Activated CD8-positive, alpha-beta T cell treated with anti-CD3 and anti-CD28 coated beads for 36 hours (primary cell): ENCODE measurements at regions of chr20 and their contacts with region 1.

Region 1: DNA sequence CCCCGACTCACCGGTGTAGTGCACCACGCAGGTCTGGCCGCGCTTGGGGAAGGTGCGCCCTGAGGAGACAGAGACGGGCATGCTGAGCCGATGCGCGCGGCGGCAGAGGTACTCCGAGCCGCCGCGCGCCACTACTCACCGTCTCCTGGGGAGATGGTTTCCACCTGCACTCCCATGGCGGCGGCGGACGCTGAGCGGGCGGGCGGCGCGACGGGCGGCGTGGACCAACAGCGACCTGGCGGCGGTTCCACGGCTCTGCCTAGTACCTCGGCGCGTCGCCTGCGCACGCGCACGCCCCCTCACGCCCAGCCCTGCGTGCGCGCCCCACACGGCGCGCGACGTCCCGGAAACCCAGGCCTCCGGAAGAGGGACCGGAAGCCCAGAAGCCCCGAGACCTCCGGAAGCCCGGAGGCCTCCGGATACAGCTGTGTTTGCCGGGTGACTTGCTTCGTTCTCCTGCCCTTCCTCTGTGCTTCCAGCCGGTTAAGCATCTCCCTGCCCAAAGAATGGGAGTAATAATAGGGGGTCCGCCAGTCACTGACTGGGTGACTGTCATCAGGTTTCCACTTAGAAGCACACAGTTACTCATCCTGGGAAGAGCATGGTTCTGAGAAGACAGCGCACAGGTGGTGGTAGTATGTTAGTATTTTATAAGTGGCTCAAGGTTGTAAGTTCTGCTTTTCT is at the start of gene FKBP1A:
- DNase-seq: peak; percentile 92
- ATAC-seq: peak; percentile 88
- H3K4me3 Mint-ChIP-seq: peak within 1 kb of the TSS; percentile 82
- H3K27ac Mint-ChIP-seq: peak within 1 kb of the TSS; percentile 91
- H3K4me1 Mint-ChIP-seq: peaks cover 46% of the 10 kb centered on the region
- H3K27me3 Mint-ChIP-seq: no peaks in the 10 kb centered on the region
- CTCF ChIP-seq: no peak
- total RNA-seq, gene FKBP1A: 259 to 282 TPM

Region 2: DNA sequence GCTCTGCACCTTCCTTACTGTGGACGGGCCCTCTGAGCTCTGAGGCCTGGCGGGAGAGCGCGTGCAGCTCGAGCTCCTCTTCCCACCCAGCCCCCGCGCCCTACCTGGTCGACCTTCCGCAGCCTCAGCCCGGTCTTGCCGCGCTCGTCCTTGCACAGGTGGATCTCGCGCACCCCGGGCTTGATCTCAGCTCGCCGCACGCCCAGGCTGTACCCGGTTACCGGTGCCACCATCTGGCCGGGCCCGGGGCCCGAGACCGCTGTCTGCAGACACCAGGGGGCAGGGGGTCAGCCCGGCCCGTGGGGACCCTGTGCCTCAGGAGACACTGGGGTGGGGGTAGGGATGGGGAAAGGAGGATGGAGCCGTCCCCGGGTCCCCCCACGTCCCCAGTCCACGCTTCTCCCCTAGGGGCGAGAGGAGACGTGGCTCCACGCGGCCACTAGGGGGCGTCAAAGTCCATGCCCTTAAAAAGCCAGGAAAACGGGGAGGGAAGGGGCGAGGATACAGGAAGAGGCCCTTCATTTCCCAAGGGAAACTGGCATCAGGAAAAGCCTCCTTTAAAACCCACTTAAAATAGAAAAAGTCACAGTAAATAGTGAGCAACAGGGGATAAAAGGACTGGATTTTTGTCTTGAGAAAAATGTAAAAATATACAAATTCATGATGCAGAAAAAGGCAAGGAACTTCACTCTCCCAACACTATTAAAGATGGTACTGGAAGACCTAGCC is 79.6 kb before region 1 on chr20:
- CTCF ChIA-PET with region 1: interaction called, 12 read pairs
- POLR2A ChIA-PET with region 1: interaction called, 4 read pairs
- intact Hi-C with region 1: no loop called
- DNase-seq: peak; percentile 65
- ATAC-seq: peak; percentile 81
- H3K4me3 Mint-ChIP-seq: no peak overlapping the region
- H3K27ac Mint-ChIP-seq: no peak overlapping the region
- H3K4me1 Mint-ChIP-seq: peaks cover 13% of the 10 kb centered on the region
- H3K27me3 Mint-ChIP-seq: peaks cover 2% of the 10 kb centered on the region
- CTCF ChIP-seq: peak; percentile 100

Region 3: DNA sequence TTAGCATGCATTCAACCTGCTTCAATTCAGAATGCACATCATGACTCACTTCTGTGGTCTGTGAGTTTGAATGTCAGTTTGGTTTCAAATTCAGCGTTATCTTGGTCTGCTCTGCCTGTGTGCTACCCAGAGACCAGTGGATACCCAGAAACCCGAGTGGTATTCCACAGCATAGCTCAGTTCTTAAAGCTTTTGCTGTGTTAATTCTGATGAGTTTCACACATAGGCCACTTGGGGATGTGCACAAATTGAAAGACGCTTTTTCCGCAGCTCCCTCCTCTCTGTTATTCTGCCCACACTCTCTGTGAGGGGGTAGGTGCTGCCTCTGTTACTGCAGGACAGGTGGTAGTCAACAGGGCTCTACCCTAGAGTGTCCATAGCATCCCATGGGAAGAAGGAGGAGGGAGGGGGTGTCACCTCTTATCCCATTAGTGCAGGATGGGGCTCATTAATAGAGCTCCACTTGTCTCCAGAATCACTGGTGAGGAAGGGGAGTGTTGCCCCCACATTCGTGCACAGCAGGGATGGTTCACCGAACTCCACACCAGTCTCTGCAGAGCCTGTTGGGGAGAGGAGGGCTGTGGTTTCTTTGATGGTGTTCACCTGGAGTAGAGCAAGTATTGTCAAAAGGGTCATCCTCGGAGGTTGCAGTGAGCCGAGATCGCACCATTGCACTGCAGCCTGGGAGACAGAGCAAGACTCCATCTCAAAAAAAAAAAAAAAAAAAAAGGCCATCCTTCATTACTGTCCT is 34.9 kb before region 1 on chr20:
- CTCF ChIA-PET with region 1: interaction called, 4 read pairs
- POLR2A ChIA-PET with region 1: interaction called, 5 read pairs
- intact Hi-C with region 1: loop called (anchors 5 kb)
- DNase-seq: peak; percentile 72
- ATAC-seq: peak; percentile 93
- H3K4me3 Mint-ChIP-seq: peak overlapping the region; percentile 49
- H3K27ac Mint-ChIP-seq: peak overlapping the region; percentile 88
- H3K4me1 Mint-ChIP-seq: peaks cover 64% of the 10 kb centered on the region
- H3K27me3 Mint-ChIP-seq: no peaks in the 10 kb centered on the region
- CTCF ChIP-seq: peak; percentile 40

Region 4: DNA sequence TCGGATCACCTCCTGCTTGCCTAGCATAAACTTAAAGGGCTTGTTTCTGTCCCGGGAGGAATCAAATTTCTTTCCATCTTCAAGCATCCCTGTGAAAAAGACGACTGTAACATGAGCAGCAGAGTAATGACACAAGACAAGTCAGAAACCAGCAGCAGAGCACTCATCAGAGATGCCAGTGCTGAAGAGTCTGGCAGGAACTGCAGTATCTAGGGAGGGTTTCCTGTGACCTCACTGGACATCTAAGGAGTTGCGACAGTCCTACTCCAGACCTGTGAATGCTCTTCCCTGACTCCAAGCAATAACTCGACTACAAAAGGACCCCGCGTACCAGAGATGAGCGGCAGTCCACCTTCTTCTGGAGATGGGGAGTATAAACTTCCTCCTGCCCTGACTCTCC is 17.4 kb before region 1 on chr20:
- CTCF ChIA-PET with region 1: interaction called, 5 read pairs
- POLR2A ChIA-PET with region 1: interaction called, 18 read pairs
- intact Hi-C with region 1: no loop called
- DNase-seq: no peak
- ATAC-seq: no peak
- H3K4me3 Mint-ChIP-seq: no peak overlapping the region
- H3K27ac Mint-ChIP-seq: peak overlapping the region; percentile 60
- H3K4me1 Mint-ChIP-seq: peaks cover 84% of the 10 kb centered on the region
- H3K27me3 Mint-ChIP-seq: no peaks in the 10 kb centered on the region
- CTCF ChIP-seq: no peak

Region 5: GRCh38 chr20:1381753-1382591 is 11.0 kb before region 1 on chr20:
- CTCF ChIA-PET with region 1: interaction called, 5 read pairs
- POLR2A ChIA-PET with region 1: interaction called, 18 read pairs
- intact Hi-C with region 1: no loop called
- DNase-seq: no peak
- ATAC-seq: no peak
- H3K4me3 Mint-ChIP-seq: no peak overlapping the region
- H3K27ac Mint-ChIP-seq: peak overlapping the region; percentile 18
- H3K4me1 Mint-ChIP-seq: peaks cover 96% of the 10 kb centered on the region
- H3K27me3 Mint-ChIP-seq: no peaks in the 10 kb centered on the region
- CTCF ChIP-seq: no peak

Region 6: GRCh38 chr20:1415667-1416468 is 22.9 kb after region 1 on chr20:
- CTCF ChIA-PET with region 1: no interaction called
- POLR2A ChIA-PET with region 1: no interaction called
- intact Hi-C with region 1: no loop called
- DNase-seq: peak; percentile 43
- ATAC-seq: peak; percentile 83
- H3K4me3 Mint-ChIP-seq: no peak overlapping the region
- H3K27ac Mint-ChIP-seq: no peak overlapping the region
- H3K4me1 Mint-ChIP-seq: peaks cover 8% of the 10 kb centered on the region
- H3K27me3 Mint-ChIP-seq: peaks cover 4% of the 10 kb centered on the region
- CTCF ChIP-seq: no peak

Region 7: DNA sequence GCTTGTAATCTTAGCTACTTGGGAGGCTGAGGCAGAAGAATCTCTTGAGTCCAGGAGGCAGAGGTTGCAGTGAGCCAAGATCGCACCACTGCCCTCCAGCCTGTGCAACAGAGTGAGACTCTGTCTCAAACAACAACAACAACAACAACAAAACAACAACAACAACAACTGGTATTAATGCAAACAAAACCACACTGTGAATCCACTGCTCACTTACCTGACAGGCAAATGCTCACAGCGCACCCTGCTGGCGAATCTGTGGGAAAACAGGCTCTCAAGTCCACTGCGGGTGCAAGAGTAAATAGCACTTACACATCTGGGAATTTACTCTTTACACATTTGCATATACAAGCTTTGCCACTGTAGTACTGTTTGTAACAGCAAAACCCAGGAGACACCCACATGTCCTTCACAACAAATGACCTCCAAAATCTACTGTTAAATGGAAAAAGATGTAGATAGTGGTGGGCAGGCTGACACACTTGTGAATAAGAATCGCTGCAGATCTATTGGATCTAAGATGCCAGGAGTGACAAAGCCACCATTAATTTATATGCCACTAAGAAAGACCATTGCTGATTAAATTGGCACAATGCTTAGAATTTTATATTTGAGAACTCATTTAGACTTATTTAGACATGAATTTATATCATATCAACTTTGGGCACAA is 44.4 kb after region 1 on chr20:
- CTCF ChIA-PET with region 1: interaction called, 5 read pairs
- POLR2A ChIA-PET with region 1: no interaction called
- intact Hi-C with region 1: loop called (anchors 2 kb)
- DNase-seq: peak; percentile 84
- ATAC-seq: peak; percentile 29
- H3K4me3 Mint-ChIP-seq: no peak overlapping the region
- H3K27ac Mint-ChIP-seq: no peak overlapping the region
- H3K4me1 Mint-ChIP-seq: peaks cover 35% of the 10 kb centered on the region
- H3K27me3 Mint-ChIP-seq: no peaks in the 10 kb centered on the region
- CTCF ChIP-seq: peak; percentile 89